ENCODE measurements at regions of chr2 and their contacts with region 1.

Region 1: GRCh38 chr2:105398699-105399432 is at the start of gene FHL2:
- DNase-seq: peak; percentile 48 to 83 (median 68)
- ATAC-seq: peak; percentile 98 to 99
- H3K4me3 Mint-ChIP-seq: peak within 1 kb of the TSS; percentile 82 to 94 (median 90)
- H3K27ac Mint-ChIP-seq: peak within 1 kb of the TSS in 8 of 10 donors; percentile 36 to 88 (median 63)
- H3K4me1 Mint-ChIP-seq: peaks cover 2 to 13% (median 8%) of the 10 kb centered on the region in 4 donors
- H3K27me3 Mint-ChIP-seq: peaks cover 0 to 27% (median 9%) of the 10 kb centered on the region in 5 donors
- polyA plus RNA-seq, gene FHL2: 2.0 to 2.8 (median 2.6) TPM

Region 2: DNA sequence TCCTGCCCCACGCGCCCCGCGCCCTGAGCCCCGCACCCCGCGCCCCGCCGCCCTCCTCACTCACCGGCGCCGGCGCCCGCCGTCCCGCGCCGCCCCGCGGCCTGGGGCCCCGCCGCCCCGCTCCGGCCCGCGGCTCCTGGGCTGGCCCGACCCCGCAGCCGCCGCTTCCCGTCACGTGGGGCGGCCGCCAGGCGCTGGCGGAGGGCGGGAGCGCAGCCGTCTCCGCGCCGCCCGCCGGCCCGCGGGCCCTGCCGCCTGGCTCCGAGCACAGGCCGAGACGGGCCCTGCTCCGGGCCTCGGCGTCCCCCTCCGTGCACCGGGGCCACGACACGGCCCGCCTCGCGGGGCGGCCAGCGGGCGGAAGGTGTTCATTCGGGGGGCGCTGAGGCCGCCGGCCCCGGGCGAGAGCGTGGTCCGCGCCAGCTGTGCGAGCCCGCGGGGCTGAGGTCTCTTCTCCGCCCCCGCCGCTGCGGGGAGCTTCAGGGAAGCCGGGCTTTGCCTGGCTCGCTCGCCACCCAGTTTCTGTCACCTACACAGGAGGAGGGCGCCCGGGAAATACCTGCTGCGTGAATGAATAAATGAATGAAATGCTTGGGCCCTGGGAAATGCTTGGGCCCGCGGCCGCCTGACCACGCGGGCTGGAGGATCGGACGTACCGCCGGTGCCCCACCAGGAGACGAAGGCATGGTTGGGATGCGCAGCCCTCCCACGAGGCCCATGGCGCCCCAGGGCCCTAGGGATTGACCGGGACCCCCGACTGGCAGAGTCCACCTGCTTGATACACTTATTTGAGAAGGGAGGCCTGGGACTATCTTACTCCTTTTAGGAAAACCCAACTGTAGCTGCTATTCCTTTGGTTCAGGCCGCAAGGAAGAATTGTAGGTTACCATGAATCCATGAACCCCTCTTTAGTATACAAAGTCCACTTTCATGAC is 69.0 kb before region 1 on chr2 and contains the start of gene TGFBRAP1:
- POLR2A ChIA-PET with region 1: no interaction called
- DNase-seq: peak; percentile 31 to 69 (median 60)
- ATAC-seq: peak; percentile 86 to 90
- H3K4me3 Mint-ChIP-seq: peak within 1 kb of the TSS; percentile 81 to 97 (median 92)
- H3K27ac Mint-ChIP-seq: peak within 1 kb of the TSS; percentile 94 to 99 (median 96)
- H3K4me1 Mint-ChIP-seq: peaks cover 23 to 49% (median 45%) of the 10 kb centered on the region in 4 donors
- H3K27me3 Mint-ChIP-seq: no peaks in the 10 kb centered on the region
- polyA plus RNA-seq, gene TGFBRAP1: 19.4 to 26.9 (median 19.7) TPM

Region 3: GRCh38 chr2:105383432-105384166 is 15.3 kb before region 1 on chr2:
- POLR2A ChIA-PET with region 1: no interaction called
- DNase-seq: no peak
- ATAC-seq: no peak
- H3K4me3 Mint-ChIP-seq: no peak overlapping the region
- H3K27ac Mint-ChIP-seq: no peak overlapping the region
- H3K4me1 Mint-ChIP-seq: peaks cover 0 to 8% (median 0%) of the 10 kb centered on the region in 4 donors
- H3K27me3 Mint-ChIP-seq: no peaks in the 10 kb centered on the region

Region 4: GRCh38 chr2:105460048-105460732 is 61.3 kb after region 1 on chr2:
- POLR2A ChIA-PET with region 1: interaction called, 11 read pairs
- DNase-seq: no peak
- ATAC-seq: no peak
- H3K4me3 Mint-ChIP-seq: no peak overlapping the region
- H3K27ac Mint-ChIP-seq: no peak overlapping the region
- H3K4me1 Mint-ChIP-seq: peaks cover 0 to 8% (median under 1%) of the 10 kb centered on the region in 4 donors
- H3K27me3 Mint-ChIP-seq: peaks cover 0 to 4% (median 3%) of the 10 kb centered on the region in 5 donors

Region 5: GRCh38 chr2:105502625-105503334 is 103.9 kb after region 1 on chr2:
- POLR2A ChIA-PET with region 1: no interaction called
- DNase-seq: no peak
- ATAC-seq: no peak
- H3K4me3 Mint-ChIP-seq: no peak overlapping the region
- H3K27ac Mint-ChIP-seq: no peak overlapping the region
- H3K4me1 Mint-ChIP-seq: peaks cover 0 to 1% (median 0%) of the 10 kb centered on the region in 4 donors
- H3K27me3 Mint-ChIP-seq: peaks cover 2 to 7% (median 5%) of the 10 kb centered on the region in 5 donors

Measured in naive thymus-derived CD8-positive, alpha-beta T cell (primary cell).